T-cell (primary cell): ENCODE measurements at regions of chr12 and their contacts with region 1.

Region 1: GRCh38 chr12:6944381-6945186 is 762 bp downstream of the C12orf57 start:
- DNase-seq: peak; percentile 74 to 93 (median 82)
- ATAC-seq: peak; percentile 53 to 69 (median 65)
- H3K4me3 ChIP-seq: peak overlapping the region; percentile 81 to 89
- H3K4me3 Mint-ChIP-seq: peak overlapping the region; percentile 88 to 98 (median 91)
- H3K27ac ChIP-seq: peak overlapping the region; percentile 97
- H3K27ac Mint-ChIP-seq: peak overlapping the region; percentile 97 to 100
- H3K4me1 ChIP-seq: peaks cover 28 to 72% of the 10 kb centered on the region in 2 experiments
- H3K4me1 Mint-ChIP-seq: peaks cover 63 to 69% (median 68%) of the 10 kb centered on the region in 3 donors
- H3K27me3 ChIP-seq: no peaks in the 10 kb centered on the region
- H3K27me3 Mint-ChIP-seq: no peaks in the 10 kb centered on the region

Region 2: GRCh38 chr12:6867413-6868210 is 77.0 kb before region 1 on chr12 and contains the start of gene TPI1:
- CTCF ChIA-PET with region 1: interaction called in 1 of 2 experiments, 14 read pairs
- POLR2A ChIA-PET with region 1: interaction called, 3 to 11 read pairs
- DNase-seq: peak in 33 of 35 experiments; percentile 32 to 82 (median 52)
- ATAC-seq: peak; percentile 75 to 79 (median 76)
- H3K4me3 ChIP-seq: peak within 1 kb of the TSS; percentile 62 to 65
- H3K4me3 Mint-ChIP-seq: peak within 1 kb of the TSS; percentile 86 to 92 (median 87)
- H3K27ac ChIP-seq: peak within 1 kb of the TSS; percentile 86
- H3K27ac Mint-ChIP-seq: peak within 1 kb of the TSS; percentile 91
- H3K4me1 ChIP-seq: peaks cover 20 to 56% of the 10 kb centered on the region in 2 experiments
- H3K4me1 Mint-ChIP-seq: peaks cover 49 to 54% (median 51%) of the 10 kb centered on the region in 3 donors
- H3K27me3 ChIP-seq: no peaks in the 10 kb centered on the region
- H3K27me3 Mint-ChIP-seq: no peaks in the 10 kb centered on the region
- total RNA-seq, gene TPI1: 132 to 208 (median 189) TPM

Region 3: GRCh38 chr12:6959058-6959804 is 14.6 kb after region 1 on chr12:
- CTCF ChIA-PET with region 1: interaction called, 58 to 126 read pairs
- POLR2A ChIA-PET with region 1: interaction called, 9 to 22 read pairs
- DNase-seq: peak; percentile 46 to 89 (median 71)
- ATAC-seq: peak; percentile 53 to 63 (median 58)
- H3K4me3 ChIP-seq: peak overlapping the region; percentile 39 to 58
- H3K4me3 Mint-ChIP-seq: peak overlapping the region; percentile 86 to 89 (median 88)
- H3K27ac ChIP-seq: peak overlapping the region; percentile 97
- H3K27ac Mint-ChIP-seq: peak overlapping the region; percentile 99 to 100
- H3K4me1 ChIP-seq: peaks cover 70 to 98% of the 10 kb centered on the region in 2 experiments
- H3K4me1 Mint-ChIP-seq: peaks cover 78 to 92% (median 87%) of the 10 kb centered on the region in 3 donors
- H3K27me3 ChIP-seq: no peaks in the 10 kb centered on the region
- H3K27me3 Mint-ChIP-seq: no peaks in the 10 kb centered on the region

Region 4: DNA sequence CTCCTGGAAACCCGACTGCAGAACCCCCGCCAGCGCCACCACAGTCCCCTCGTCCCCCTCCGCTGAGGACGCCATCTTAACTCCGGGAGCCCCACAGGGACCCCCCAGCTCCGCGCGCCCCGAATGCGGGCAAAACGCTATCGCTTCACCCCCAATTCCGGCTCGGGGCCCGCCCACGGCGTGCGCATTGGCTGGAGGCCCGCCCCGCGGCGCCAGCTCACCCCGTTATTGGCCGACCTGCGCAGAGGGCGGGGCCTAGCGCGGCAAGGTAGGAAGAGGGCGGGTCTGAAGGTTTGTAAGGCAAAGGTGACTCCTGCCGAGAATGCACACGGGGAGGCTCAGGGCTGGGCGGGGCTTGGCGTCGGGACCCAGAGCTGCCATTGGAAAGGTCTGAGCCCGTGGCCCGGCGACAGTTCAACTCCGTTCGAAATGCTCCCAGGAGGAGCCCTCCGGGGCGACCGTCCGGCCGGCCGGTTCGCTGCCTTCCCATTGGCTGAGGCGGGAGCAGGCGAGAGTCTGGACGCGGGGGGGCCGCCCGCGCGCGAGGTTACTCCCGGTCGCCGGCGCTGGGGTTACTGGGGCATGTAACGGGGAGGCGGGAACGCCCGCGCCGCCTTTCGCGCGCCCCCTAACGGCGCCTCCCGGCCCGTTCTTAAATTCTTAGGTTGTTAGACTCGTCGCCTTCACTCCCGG is 73.9 kb after region 1 on chr12 and contains the start of gene LPCAT3:
- CTCF ChIA-PET with region 1: interaction called, 3 to 16 read pairs
- POLR2A ChIA-PET with region 1: interaction called, 5 read pairs
- DNase-seq: peak; percentile 93 to 99 (median 96)
- ATAC-seq: peak; percentile 94 to 98 (median 97)
- H3K4me3 ChIP-seq: peak within 1 kb of the TSS; percentile 95 to 96
- H3K4me3 Mint-ChIP-seq: peak within 1 kb of the TSS; percentile 89 to 98 (median 91)
- H3K27ac ChIP-seq: peak within 1 kb of the TSS; percentile 86
- H3K27ac Mint-ChIP-seq: peak within 1 kb of the TSS; percentile 80
- H3K4me1 ChIP-seq: peaks cover 9 to 21% of the 10 kb centered on the region in 2 experiments
- H3K4me1 Mint-ChIP-seq: peaks cover 29 to 30% (median 30%) of the 10 kb centered on the region in 3 donors
- H3K27me3 ChIP-seq: no peaks in the 10 kb centered on the region
- H3K27me3 Mint-ChIP-seq: no peaks in the 10 kb centered on the region
- total RNA-seq, gene LPCAT3: 19.3 to 27.6 (median 22.6) TPM

Region 5: DNA sequence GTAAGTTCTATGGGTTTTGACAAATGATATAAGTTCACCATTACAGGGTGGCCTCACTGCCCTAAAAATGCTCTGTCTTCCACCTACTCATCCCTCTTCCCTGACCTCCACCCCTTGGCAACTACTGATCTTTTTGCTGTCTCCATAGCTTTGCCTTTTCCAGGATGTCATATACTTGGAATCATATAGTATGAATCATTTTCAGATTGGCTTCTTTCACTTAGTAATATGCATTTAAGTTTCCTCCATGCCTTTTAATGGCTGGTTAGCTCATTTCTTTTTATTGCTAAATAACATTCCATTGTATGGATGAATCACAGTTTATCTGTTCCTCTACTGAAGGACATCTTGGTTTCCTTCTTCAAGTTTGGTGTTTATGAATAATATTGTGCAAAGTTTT is 230.9 kb after region 1 on chr12:
- CTCF ChIA-PET with region 1: interaction called in 1 of 2 experiments, 10 read pairs
- POLR2A ChIA-PET with region 1: no interaction called
- DNase-seq: no peak
- ATAC-seq: no peak
- H3K4me3 ChIP-seq: no peak overlapping the region
- H3K4me3 Mint-ChIP-seq: no peak overlapping the region
- H3K27ac ChIP-seq: no peak overlapping the region
- H3K27ac Mint-ChIP-seq: no peak overlapping the region
- H3K4me1 ChIP-seq: no peaks in the 10 kb centered on the region
- H3K4me1 Mint-ChIP-seq: no peaks in the 10 kb centered on the region
- H3K27me3 ChIP-seq: peaks cover 0 to 8% of the 10 kb centered on the region in 2 experiments
- H3K27me3 Mint-ChIP-seq: peaks cover 30 to 42% of the 10 kb centered on the region in 2 donors